Dorsolateral prefrontal cortex (tissue), 120 donors: ENCODE measurements at regions of chr6 and their contacts with region 1.

Region 1: DNA sequence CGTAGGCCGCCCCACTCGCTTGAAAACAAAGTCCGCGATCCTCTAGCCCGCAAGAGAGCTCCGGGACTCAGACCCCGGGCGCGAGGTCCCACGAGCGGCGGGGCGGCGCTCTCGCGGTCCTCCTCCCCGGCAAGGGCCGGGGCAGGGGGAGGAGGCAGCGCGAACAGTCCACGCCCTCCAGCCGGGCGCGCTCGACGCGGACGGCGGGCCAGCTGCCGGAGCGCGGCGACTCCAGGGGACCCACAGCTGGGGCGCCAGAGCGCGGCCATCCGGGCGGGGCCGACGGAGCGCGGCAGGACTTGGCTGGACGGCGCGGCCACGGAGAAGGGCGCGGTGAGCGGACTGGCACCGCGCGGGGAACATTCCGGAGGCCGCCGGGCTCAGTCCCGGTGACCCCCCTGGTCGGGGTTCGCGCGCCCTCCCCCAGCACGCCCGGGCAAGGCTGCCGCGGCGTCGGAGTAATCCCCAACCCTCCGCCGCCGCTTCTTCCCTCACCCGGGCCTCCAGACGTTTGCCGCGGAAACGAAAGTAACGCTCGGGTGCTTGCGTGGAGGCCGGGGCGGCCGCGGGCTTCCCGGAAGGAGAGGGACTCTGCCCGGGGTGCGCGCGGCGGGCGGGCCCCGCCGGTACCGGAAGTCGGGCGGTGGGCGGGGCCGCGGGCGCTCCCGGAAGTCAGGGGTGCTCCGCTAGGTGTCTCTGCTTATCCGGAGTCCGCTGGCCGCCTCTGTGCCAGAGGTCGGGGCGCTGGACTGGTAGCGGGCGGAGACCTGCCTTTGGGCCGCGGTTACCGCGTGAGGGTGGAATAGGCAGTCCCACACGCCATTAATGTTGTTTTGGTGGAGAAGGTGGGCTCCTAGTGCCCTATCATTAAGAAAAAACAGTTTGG is at the start of gene RIPK1:
- DNase-seq: peak; percentile 85 to 96 (median 92)
- H3K4me3 ChIP-seq: peak within 1 kb of the TSS; percentile 68 to 98 (median 89)
- H3K27ac ChIP-seq: peak within 1 kb of the TSS; percentile 94 to 100 (median 99)
- H3K27me3 ChIP-seq: no peaks in the 10 kb centered on the region
- CTCF ChIP-seq: peak in 55 of 56 donors; percentile 34 to 80 (median 64)
- total RNA-seq, gene RIPK1: 6.5 to 17.9 (median 11.1) TPM

Region 2: GRCh38 chr6:2765166-2765895 is 303.2 kb before region 1 on chr6 and contains the start of gene WRNIP1:
- intact Hi-C with region 1: loop called in 1 of 2 experiments (anchors 1 kb)
- DNase-seq: peak; percentile 98 to 100 (median 99)
- H3K4me3 ChIP-seq: peak within 1 kb of the TSS; percentile 64 to 97 (median 87)
- H3K27ac ChIP-seq: peak within 1 kb of the TSS; percentile 86 to 99 (median 97)
- H3K27me3 ChIP-seq: no peaks in the 10 kb centered on the region
- CTCF ChIP-seq: peak; percentile 18 to 87 (median 60)
- total RNA-seq, gene WRNIP1: 32.1 to 60.1 (median 47.7) TPM

Region 3: DNA sequence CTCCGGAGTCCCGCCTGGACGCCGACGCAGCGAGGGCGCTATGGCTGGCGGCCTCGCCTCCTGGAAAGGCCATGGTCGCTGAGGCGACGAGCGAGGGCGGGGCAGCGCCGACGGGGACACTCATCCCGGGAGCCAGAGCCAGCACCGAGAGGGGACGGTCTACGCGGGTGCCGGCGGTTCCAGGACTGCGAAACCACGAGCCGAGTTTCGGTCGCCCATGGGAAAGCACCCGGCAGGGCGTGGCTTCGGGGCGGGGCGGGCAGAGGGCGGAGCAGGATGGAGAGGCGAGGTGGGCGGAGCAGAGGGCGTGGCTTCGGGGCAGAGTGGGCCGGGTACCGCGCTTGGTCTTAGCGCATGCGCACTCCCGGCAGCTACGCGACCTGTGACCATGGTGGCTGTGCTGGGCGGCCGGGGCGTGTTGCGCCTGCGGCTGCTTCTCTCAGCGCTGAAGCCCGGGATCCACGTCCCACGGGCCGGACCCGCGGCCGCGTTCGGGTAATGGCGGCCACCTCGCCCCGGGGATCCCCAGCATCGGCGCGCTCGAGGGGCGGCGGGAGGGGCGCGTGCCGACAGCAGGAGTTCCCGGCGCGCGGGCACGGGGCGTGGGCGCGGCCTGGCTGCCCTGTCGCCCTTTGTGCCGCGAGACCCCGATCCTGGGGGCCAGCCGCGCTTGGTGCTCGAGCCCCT is 49.9 kb after region 1 on chr6 and contains the start of gene BPHL:
- intact Hi-C with region 1: loop called (anchors 2 to 5 kb)
- DNase-seq: peak; percentile 93 to 99 (median 97)
- H3K4me3 ChIP-seq: peak within 1 kb of the TSS; percentile 59 to 99 (median 89)
- H3K27ac ChIP-seq: peak within 1 kb of the TSS in 58 of 59 donors; percentile 37 to 95 (median 88)
- H3K27me3 ChIP-seq: no peaks in the 10 kb centered on the region
- CTCF ChIP-seq: peak in 36 of 56 donors; percentile 7 to 62 (median 28)
- total RNA-seq, gene BPHL: 13.6 to 41.1 (median 26.1) TPM